Thyroid gland (tissue), 4 donors: ENCODE measurements at regions of chr6 and their contacts with region 1.

Region 1: GRCh38 chr6:158072083-158072721 is 90.5 kb downstream of the SYNJ2 start:
- DNase-seq: peak; percentile 75 to 83
- H3K4me3 ChIP-seq: no peak overlapping the region
- H3K27ac ChIP-seq: no peak overlapping the region
- H3K4me1 ChIP-seq: peaks cover 13 to 37% of the 10 kb centered on the region in 2 donors
- H3K27me3 ChIP-seq: no peaks in the 10 kb centered on the region
- CTCF ChIP-seq: peak; percentile 74 to 86 (median 82)
- POLR2A ChIP-seq: no peak

Region 2: DNA sequence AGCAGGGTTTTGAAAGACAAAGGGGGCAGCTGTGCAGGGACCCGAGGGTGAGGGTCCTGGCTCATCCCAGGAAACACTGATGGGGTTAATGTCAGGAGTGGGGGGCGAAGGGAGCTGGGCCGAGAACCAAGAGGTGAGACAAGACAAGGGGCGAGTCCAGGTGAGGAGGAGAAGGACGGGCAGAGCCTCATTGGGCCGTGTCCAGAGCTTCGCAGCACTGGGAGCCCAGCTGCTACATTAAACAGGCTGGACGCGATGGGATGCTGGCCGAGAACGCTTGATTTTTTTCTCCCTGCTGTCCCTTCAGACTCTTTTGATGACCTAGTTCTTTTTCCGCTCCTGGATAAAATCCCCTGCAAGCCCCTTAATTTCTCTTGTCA is 422.0 kb before region 1 on chr6:
- intact Hi-C with region 1: loop called (anchors 10 kb)
- DNase-seq: peak; percentile 86 to 87
- H3K4me3 ChIP-seq: no peak overlapping the region
- H3K27ac ChIP-seq: peak overlapping the region; percentile 62 to 95 (median 79)
- H3K4me1 ChIP-seq: peaks cover 54 to 60% of the 10 kb centered on the region in 2 donors
- H3K27me3 ChIP-seq: no peaks in the 10 kb centered on the region
- CTCF ChIP-seq: no peak
- POLR2A ChIP-seq: peak in 1 of 2 donors; percentile 4

Region 3: GRCh38 chr6:157756708-157757429 is 315.3 kb before region 1 on chr6:
- intact Hi-C with region 1: loop called (anchors 5 kb)
- DNase-seq: peak; percentile 94 to 95
- H3K4me3 ChIP-seq: no peak overlapping the region
- H3K27ac ChIP-seq: peak overlapping the region; percentile 23 to 37 (median 36)
- H3K4me1 ChIP-seq: peaks cover 8 to 33% of the 10 kb centered on the region in 2 donors
- H3K27me3 ChIP-seq: no peaks in the 10 kb centered on the region
- CTCF ChIP-seq: peak; percentile 74 to 97 (median 86)
- POLR2A ChIP-seq: no peak

Region 4: DNA sequence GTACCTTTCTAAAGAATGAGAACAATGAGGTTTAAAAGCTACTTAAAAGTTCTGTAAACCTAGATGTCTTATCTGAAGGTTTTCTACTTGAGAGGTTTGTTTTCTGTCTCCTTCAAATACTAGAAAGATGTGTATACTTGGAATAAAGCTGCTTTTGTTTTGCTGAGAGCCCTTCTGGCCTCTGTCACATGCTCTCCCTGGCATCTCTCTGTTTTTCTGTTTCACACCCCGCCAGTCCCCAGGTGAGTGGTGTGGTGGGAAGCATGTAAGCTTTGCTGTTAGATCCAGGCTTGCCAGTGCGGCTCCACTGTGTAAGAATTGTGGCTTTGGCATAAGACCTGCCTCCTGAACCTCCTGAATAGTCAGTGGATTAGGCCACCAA is 192.3 kb before region 1 on chr6:
- intact Hi-C with region 1: loop called (anchors 5 kb)
- DNase-seq: peak; percentile 86 to 87
- H3K4me3 ChIP-seq: no peak overlapping the region
- H3K27ac ChIP-seq: peak overlapping the region; percentile 48 to 55 (median 53)
- H3K4me1 ChIP-seq: peaks cover 21 to 24% of the 10 kb centered on the region in 2 donors
- H3K27me3 ChIP-seq: no peaks in the 10 kb centered on the region
- CTCF ChIP-seq: no peak
- POLR2A ChIP-seq: peak in 1 of 2 donors; percentile 26

Region 5: DNA sequence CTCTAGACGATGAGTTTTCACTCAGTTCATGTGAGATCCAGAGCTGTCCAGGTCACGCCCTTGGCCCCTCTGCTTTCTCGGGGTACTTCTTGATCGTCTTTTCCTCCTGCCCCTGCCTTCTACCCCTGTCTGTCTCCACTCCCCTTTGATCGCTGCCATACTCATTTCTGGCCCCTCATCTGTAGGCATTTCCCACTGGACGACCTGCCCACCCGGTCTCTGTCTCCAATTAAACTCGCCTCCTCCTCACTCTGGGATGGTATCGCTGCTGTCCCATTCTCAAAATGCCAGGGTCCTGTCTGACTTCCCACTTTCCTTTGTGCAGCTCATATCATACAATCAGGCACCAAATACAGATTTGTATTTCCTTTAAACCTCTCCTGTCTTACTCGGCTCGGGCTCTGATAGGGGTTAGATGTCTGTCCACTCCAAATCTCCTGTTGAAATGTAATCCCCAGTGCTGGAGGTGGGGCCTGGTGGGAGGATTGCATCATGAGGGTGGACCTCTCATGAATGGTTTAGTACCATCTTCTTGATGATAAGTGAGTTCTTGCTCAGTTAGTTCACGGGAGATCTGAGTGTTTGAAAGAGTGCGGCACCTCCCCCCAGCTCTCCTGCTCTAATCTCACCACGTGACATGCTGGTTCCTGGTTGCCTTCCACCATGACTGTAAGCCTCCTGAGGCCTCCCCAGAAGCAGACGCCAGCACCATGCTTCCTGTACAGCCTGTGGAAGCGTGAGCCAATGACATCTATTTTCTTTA is 94.0 kb before region 1 on chr6:
- intact Hi-C with region 1: loop called (anchors 5 kb)
- DNase-seq: no peak
- H3K4me3 ChIP-seq: no peak overlapping the region
- H3K27ac ChIP-seq: no peak overlapping the region
- H3K4me1 ChIP-seq: peaks cover 4 to 9% of the 10 kb centered on the region in 2 donors
- H3K27me3 ChIP-seq: no peaks in the 10 kb centered on the region
- CTCF ChIP-seq: no peak
- POLR2A ChIP-seq: no peak

Region 6: GRCh38 chr6:158143700-158144099 is 71.5 kb after region 1 on chr6:
- intact Hi-C with region 1: no loop called
- DNase-seq: no peak
- H3K4me3 ChIP-seq: no peak overlapping the region
- H3K27ac ChIP-seq: no peak overlapping the region
- H3K4me1 ChIP-seq: no peaks in the 10 kb centered on the region
- H3K27me3 ChIP-seq: no peaks in the 10 kb centered on the region
- CTCF ChIP-seq: no peak
- POLR2A ChIP-seq: no peak